ENCODE measurements at regions of chr4 and their contacts with region 1.

Region 1: GRCh38 chr4:24686871-24687680 is 102.7 kb upstream of the DHX15 start:
- DNase-seq: no peak
- ATAC-seq: no peak
- H3K4me3 Mint-ChIP-seq: no peak overlapping the region
- H3K27ac Mint-ChIP-seq: no peak overlapping the region
- H3K4me1 Mint-ChIP-seq: no peaks in the 10 kb centered on the region
- H3K27me3 Mint-ChIP-seq: peaks cover 2% of the 10 kb centered on the region
- CTCF ChIP-seq: no peak

Region 2: GRCh38 chr4:24488399-24489164 is 198.5 kb before region 1 on chr4:
- CTCF ChIA-PET with region 1: no interaction called
- POLR2A ChIA-PET with region 1: no interaction called
- intact Hi-C with region 1: loop called (anchors 2 kb)
- DNase-seq: no peak
- ATAC-seq: no peak
- H3K4me3 Mint-ChIP-seq: no peak overlapping the region
- H3K27ac Mint-ChIP-seq: no peak overlapping the region
- H3K4me1 Mint-ChIP-seq: no peaks in the 10 kb centered on the region
- H3K27me3 Mint-ChIP-seq: peaks cover 17% of the 10 kb centered on the region
- CTCF ChIP-seq: no peak

Measured in activated B cell treated with CpG ODN at 0.5 μM for 24 hours (primary cell).